ENCODE measurements at regions of chr17 and their contacts with region 1.

Region 1: GRCh38 chr17:47895856-47896671 is at the start of gene SP2:
- DNase-seq: peak; percentile 100
- H3K4me3 Mint-ChIP-seq: peak within 1 kb of the TSS; percentile 91
- H3K27ac Mint-ChIP-seq: peak within 1 kb of the TSS; percentile 95
- H3K4me1 Mint-ChIP-seq: peaks cover 48% of the 10 kb centered on the region
- H3K27me3 Mint-ChIP-seq: no peaks in the 10 kb centered on the region
- total RNA-seq, gene SP2: 24.6 to 25.6 TPM

Region 2: GRCh38 chr17:47712330-47713023 is 183.6 kb before region 1 on chr17:
- CTCF ChIA-PET with region 1: no interaction called
- POLR2A ChIA-PET with region 1: no interaction called
- DNase-seq: no peak
- H3K4me3 Mint-ChIP-seq: no peak overlapping the region
- H3K27ac Mint-ChIP-seq: no peak overlapping the region
- H3K4me1 Mint-ChIP-seq: peaks cover 60% of the 10 kb centered on the region
- H3K27me3 Mint-ChIP-seq: peaks cover 14% of the 10 kb centered on the region

Region 3: GRCh38 chr17:47821424-47822391 is 74.4 kb before region 1 on chr17 and contains the start of gene OSBPL7:
- CTCF ChIA-PET with region 1: no interaction called
- POLR2A ChIA-PET with region 1: interaction called, 14 read pairs
- DNase-seq: peak; percentile 83
- H3K4me3 Mint-ChIP-seq: peak within 1 kb of the TSS; percentile 98
- H3K27ac Mint-ChIP-seq: peak within 1 kb of the TSS; percentile 83
- H3K4me1 Mint-ChIP-seq: peaks cover 28% of the 10 kb centered on the region
- H3K27me3 Mint-ChIP-seq: no peaks in the 10 kb centered on the region
- total RNA-seq, gene OSBPL7: 33.2 to 36.1 TPM

Region 4: DNA sequence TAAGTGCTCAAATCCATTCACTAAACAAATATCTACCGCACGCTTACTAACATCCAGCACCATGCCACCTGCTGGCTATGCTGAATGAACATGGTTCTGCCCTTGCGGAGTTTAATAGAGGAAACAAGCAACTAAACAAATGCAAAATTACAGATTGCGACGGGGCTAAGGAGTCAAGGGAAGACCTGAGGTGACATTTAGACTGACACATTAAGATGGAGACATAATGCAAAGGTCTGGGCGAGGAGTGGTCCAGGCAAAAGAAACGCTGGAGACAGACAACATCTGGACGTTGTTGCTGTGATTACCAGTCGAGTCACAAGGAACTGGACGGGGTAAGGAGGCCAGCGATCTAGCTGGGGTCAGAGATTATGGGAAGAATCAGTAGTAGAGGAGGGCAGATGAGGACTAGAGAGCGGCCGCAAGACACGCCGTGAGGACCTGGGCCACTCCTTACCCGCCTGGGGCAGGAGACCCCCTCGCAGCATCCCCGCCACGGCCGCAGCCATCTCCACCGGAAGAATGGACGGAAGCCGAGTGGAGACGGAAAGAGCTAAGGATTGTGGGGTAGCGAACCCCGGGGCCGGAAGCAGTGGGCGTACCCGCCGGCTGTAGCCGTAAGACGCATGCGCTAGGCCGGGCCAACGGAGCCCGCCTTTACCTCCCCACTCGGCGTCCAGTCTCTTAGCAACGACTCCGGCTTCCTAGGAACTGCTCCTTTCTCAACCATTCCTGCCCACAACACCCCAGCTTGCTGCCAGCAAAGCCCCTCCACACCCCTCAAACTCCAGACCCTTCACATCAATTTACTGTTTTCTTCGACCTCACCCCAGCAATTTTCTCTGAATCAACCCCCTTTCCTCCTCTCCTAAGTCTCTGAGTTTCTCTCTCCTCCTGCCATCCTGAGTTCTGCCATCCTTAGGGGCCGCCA is 64.8 kb before region 1 on chr17 and contains the starts of genes LRRC46 and MRPL10:
- CTCF ChIA-PET with region 1: interaction called, 5 read pairs
- POLR2A ChIA-PET with region 1: interaction called, 58 read pairs
- DNase-seq: peak; percentile 94
- H3K4me3 Mint-ChIP-seq: peak within 1 kb of the TSS; percentile 90
- H3K27ac Mint-ChIP-seq: peak within 1 kb of the TSS; percentile 100
- H3K4me1 Mint-ChIP-seq: peaks cover 69% of the 10 kb centered on the region
- H3K27me3 Mint-ChIP-seq: no peaks in the 10 kb centered on the region
- total RNA-seq, gene LRRC46: 0.45 to 0.53 TPM
- total RNA-seq, gene MRPL10: 91.5 to 95.7 TPM

Region 5: DNA sequence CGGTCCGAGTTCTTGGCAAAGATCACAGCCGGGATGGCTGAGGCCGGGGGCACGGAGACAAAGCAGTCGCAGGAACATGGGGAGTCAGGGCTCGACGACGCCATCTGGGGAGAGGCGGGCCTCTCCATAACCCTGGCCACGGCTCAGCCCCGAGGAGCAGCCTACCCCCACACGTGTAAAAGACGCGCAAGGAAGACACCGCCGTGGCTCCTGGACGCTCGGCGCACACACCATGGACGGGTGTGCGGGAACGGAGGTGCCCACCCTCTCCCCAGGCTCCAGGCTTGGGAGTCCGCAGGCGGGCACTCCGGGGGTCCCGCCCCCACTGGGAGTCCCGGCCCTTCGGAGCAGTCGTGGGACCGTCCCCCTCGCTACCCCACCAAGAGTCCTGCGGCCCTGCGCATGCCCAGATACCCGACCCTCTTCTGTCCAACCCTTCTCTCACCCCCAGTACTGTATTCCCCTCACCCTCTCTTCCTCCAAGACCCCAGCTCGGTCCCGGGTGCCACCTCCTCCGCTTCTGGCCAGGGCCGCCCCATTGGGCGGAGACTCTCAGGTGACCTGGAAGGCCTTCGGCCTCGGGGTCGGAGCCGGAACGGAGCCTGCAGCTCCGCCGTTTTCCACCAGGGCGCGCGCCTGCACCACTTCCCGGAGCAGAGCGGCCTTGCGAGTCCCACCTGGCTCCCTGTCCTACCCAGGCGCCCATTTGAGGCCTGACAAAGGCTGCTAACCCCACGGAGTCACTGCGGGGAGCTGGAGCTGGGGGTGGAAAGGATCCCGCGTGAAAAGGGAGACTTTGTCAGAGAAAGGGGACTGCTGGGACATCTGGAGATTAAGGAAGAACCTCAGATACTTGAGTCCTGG is 55.1 kb before region 1 on chr17 and contains the start of gene SCRN2:
- CTCF ChIA-PET with region 1: interaction called, 411 read pairs
- POLR2A ChIA-PET with region 1: interaction called, 53 read pairs
- DNase-seq: peak; percentile 90
- H3K4me3 Mint-ChIP-seq: peak within 1 kb of the TSS; percentile 93
- H3K27ac Mint-ChIP-seq: peak within 1 kb of the TSS; percentile 66
- H3K4me1 Mint-ChIP-seq: peaks cover 36% of the 10 kb centered on the region
- H3K27me3 Mint-ChIP-seq: peaks cover 20% of the 10 kb centered on the region
- total RNA-seq, gene SCRN2: 29.1 to 29.8 TPM

Region 6: DNA sequence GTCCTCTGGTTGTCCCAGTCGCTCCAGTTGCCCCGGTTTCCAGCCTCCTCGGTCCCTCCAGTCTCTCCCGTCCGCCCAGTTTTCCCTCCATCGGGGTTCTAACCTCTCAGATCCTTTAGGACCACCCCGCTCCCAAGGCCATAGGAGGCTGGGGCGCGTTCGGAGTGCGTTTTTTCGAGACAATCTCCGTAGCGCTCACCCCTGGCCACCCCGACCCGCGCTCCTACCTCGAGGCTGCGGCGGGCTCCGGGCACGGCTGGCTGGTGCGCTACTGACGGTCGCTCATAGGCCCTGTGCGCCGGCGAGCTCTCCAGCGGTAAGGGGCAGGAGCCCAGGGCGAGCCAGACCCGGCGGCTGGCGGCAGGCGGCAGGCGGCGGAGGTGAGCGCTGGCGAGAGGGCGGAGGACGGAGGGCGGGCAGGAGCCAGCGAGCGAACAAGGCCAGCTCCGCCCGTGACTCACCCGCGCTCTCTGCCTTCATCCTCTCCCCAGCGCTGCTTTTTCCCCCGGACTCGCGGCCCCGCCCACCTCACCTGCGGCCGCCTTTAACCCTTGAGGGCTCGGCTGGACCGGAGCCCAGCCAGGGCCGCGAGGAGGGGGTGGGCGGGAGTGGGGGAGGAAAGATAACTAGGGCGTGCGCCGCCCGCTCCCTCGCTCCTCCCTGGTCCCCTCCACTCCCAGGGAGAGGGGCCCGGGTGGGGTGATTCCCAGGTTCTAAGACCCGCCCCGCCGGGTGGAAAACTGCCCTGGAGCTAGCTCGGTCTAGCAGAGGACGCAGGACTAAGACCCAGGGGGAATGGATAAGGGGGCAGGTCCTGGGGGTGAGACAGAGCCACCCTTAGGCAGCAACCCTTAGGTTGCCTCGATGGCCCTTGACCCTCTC is 45.1 kb before region 1 on chr17 and contains the start of gene SP6:
- CTCF ChIA-PET with region 1: interaction called, 411 read pairs
- POLR2A ChIA-PET with region 1: interaction called, 17 read pairs
- DNase-seq: peak; percentile 65
- H3K4me3 Mint-ChIP-seq: no peak within 1 kb of the TSS
- H3K27ac Mint-ChIP-seq: no peak within 1 kb of the TSS
- H3K4me1 Mint-ChIP-seq: peaks cover 15% of the 10 kb centered on the region
- H3K27me3 Mint-ChIP-seq: peaks cover 84% of the 10 kb centered on the region
- total RNA-seq, gene SP6: 0.10 to 0.15 TPM